Dendritic cell treated with granulocyte-macrophage colony-stimulating factor and Interleukin-4, amounts not matched to agents 40 ng/mL and 50 ng/mL, for 4 days (primary cell): ENCODE measurements at regions of chr1 and their contacts with region 1.

Region 1: GRCh38 chr1:1307908-1308755 is at the starts of genes ACAP3 and PUSL1:
- H3K4me3 Mint-ChIP-seq: peak within 1 kb of the TSS; percentile 89
- H3K27ac Mint-ChIP-seq: peak within 1 kb of the TSS; percentile 89
- H3K4me1 Mint-ChIP-seq: peaks cover 48% of the 10 kb centered on the region
- H3K27me3 Mint-ChIP-seq: no peaks in the 10 kb centered on the region

Region 2: DNA sequence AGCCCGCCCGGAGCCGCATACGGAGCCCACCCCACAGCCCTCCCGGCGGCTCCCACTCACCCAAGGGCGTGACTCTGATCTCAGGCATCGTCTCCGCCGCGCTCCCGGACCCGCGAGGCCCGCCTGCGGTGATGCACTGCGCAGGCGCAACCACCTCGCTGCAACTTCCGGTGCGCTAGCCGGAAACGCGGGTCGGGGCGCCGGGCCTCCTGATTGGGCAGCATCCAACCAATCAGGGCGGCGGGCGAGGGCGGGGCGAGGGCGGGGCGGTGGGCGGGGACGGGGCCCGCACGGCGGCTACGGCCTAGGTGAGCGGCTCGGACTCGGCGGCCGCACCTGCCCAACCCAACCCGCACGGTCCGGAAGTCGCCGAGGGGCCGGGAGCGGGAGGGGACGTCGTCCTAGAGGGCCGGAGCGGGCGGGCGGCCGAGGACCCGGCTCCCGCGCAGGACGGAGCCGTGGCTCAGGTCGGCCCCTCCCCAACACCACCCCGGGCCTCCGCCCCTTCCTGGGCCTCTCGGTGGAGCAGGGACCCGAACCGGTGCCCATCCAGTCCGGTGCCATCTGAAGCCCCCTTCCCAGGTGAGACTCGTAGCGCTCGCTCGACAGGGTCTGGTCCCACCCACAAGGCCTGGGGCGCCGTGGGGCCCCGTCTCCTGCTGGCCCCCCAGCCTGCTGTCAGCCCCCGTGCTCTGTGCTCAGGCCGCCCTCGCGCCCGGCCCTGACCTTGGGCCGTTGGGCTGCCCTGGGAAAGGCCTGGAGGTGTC is 16.6 kb after region 1 on chr1 and contains the starts of genes CPTP and INTS11:
- intact Hi-C with region 1: loop called (anchors 2 kb)
- H3K4me3 Mint-ChIP-seq: peak within 1 kb of the TSS; percentile 80
- H3K27ac Mint-ChIP-seq: peak within 1 kb of the TSS; percentile 76
- H3K4me1 Mint-ChIP-seq: peaks cover 43% of the 10 kb centered on the region
- H3K27me3 Mint-ChIP-seq: no peaks in the 10 kb centered on the region